Colonic mucosa (tissue), 4 donors: ENCODE measurements at regions of chr6 and their contacts with region 1.

Region 1: GRCh38 chr6:121319112-121319553 is 15.1 kb downstream of the TBC1D32 start:
- DNase-seq: no peak
- H3K4me3 ChIP-seq: no peak overlapping the region
- H3K27ac ChIP-seq: no peak overlapping the region
- H3K4me1 ChIP-seq: no peaks in the 10 kb centered on the region
- H3K27me3 ChIP-seq: no peaks in the 10 kb centered on the region
- CTCF ChIP-seq: no peak

Region 2: DNA sequence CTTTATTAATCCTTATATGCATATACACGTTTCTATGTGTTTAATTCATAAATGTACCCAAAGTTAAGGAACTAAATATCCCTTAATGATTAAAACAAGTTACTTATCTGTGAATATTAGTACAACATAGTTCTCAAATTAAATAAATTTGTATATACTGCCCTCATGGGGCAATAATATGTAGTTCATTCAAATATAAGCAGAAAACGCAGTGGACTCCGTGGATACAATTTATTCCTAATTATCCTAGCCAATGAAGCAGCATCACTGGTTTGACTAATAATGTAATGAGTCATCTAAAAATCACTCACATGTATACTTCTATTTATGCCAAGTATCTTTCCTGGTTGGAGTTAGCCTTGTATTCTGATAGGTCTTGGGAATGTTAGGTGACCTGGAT is 96.5 kb before region 1 on chr6:
- intact Hi-C with region 1: no loop called
- DNase-seq: no peak
- H3K4me3 ChIP-seq: no peak overlapping the region
- H3K27ac ChIP-seq: no peak overlapping the region
- H3K4me1 ChIP-seq: no peaks in the 10 kb centered on the region
- H3K27me3 ChIP-seq: no peaks in the 10 kb centered on the region
- CTCF ChIP-seq: no peak

Region 3: GRCh38 chr6:121399966-121400365 is 80.8 kb after region 1 on chr6:
- intact Hi-C with region 1: loop called (anchors 5 kb)
- DNase-seq: no peak
- H3K4me3 ChIP-seq: no peak overlapping the region
- H3K27ac ChIP-seq: peak overlapping the region; percentile 24
- H3K4me1 ChIP-seq: no peaks in the 10 kb centered on the region
- H3K27me3 ChIP-seq: no peaks in the 10 kb centered on the region
- CTCF ChIP-seq: no peak

Region 4: DNA sequence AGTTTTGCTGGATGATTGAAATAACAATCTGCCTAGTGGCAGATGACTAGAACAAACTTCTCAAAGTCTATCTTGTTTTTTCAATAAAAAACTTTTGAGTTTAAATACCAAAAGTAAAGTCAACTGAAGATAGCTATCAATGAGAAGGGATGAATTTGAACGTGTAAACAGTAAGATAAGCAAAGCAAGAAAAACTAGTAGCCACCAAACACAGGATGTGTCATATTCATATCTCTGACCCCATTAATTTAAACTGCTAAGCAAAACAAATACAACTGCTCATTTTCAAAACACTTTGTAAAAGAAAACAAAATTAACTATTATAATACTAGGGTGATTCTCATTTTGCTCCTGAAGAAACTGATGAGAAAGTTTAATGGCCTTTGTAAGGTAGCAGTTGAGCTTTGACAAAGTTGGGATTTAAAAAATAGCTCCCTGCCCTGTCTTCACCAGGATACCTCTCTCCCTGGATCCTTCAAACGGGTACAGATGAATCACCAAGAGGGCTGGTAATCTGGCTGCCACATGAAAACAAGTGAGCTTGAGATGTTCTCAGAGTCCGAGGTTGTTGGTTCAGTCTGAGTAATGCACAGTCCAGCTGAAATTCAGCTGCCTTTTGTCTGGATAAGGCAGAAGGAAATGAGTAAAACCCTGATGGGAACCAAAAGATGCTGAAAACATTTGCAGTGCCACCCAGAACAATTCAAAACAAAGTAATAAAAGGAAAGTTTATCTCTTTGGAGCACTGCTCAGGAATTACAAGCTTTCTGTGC is 202.9 kb after region 1 on chr6:
- intact Hi-C with region 1: no loop called
- DNase-seq: no peak
- H3K4me3 ChIP-seq: no peak overlapping the region
- H3K27ac ChIP-seq: peak overlapping the region; percentile 38
- H3K4me1 ChIP-seq: no peaks in the 10 kb centered on the region
- H3K27me3 ChIP-seq: no peaks in the 10 kb centered on the region
- CTCF ChIP-seq: no peak